Activated CD8-positive, alpha-beta T cell treated with anti-CD3 and anti-CD28 coated beads for 36 hours (primary cell): ENCODE measurements at regions of chr13 and their contacts with region 1.

Region 1: DNA sequence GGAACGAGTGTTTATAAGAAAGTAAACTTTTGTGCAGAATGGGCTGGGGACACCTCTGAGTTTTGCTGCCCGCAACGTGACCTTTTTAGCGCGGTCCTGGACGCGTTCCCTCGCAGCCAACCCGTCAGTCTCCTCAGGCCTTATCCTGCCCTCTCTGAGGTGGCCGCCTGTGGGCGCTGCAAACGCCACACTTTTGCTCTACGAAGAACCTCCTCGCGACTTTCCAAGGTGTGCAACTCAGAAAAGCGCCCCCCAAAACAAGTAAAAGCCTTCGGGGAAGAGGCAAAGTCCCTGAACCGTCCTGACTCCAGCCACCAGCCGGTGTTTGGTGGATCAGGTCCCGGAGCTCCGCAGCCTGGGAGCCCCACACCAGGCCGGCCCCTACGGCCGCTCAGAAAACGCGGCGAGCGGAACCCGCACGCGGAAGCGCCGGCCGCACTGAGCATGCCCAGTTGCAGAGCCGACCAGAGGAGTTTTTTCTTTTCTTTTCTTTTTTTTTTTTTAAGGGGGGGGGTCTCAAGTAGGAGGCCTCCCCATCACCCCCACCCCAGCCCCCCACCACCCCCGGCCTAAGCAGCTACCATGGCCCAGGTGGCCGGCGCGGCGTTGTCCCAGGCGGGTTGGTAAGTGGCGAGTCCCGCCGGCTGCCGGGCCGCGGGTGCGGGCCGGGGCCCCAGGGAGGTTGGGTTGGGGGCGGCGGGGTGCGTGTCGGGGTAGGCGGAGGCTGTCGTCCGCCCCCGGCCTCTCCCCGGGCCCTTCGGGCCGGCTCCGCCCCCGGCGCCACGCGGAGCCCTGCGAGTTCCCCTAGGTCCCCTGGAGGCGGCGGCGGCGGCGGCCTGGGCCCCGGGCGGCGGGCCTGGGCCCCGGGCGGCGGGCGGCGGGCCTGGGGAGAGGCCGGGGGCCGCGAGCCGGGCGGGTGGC is at the start of gene TDRD3:
- DNase-seq: peak; percentile 91
- ATAC-seq: peak; percentile 78
- H3K4me3 Mint-ChIP-seq: peak within 1 kb of the TSS; percentile 96
- H3K27ac Mint-ChIP-seq: peak within 1 kb of the TSS; percentile 99
- H3K4me1 Mint-ChIP-seq: peaks cover 36% of the 10 kb centered on the region
- H3K27me3 Mint-ChIP-seq: no peaks in the 10 kb centered on the region
- CTCF ChIP-seq: peak; percentile 62
- total RNA-seq, gene TDRD3: 17.1 to 19.0 TPM

Region 2: DNA sequence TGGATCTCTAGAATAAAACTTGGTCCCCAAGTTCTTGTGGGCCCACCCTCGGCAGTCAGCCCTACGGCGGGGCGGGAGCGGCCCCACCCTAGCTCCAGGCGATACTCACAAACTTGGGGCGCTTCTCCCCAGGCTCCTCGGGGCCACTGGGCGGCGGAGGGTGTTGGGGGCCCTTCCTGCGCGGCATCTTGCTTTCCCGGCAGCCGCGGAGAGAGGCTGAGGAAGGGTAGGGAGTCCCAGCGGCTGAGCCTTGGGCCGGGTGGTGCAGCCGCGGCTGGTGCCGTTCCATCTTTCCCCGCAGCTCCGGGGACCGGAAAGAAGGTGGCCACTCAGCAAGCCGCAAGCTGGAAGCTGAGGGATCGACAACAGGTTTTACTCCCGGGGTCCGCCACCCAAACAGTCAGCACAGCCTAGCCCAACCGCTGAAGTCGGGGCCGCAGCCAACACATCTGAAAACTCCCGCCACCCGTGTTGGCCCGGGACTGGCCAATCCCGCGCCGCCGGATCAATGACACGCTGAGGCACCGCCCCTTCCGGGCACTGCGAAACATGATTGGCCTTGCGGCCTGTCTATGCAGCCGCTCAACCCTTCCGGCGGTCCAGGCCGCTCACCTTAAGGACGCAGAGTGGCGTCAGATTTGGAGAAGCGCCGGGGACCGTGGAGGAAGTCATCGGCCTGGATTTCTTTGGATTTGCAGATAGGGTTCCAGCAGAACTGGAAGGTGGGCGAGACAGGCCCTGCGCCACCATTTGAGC is 233.4 kb before region 1 on chr13 and contains the start of gene DIAPH3:
- CTCF ChIA-PET with region 1: no interaction called
- POLR2A ChIA-PET with region 1: interaction called, 7 read pairs
- intact Hi-C with region 1: loop called (anchors 2 kb)
- DNase-seq: peak; percentile 97
- ATAC-seq: peak; percentile 99
- H3K4me3 Mint-ChIP-seq: peak within 1 kb of the TSS; percentile 94
- H3K27ac Mint-ChIP-seq: peak within 1 kb of the TSS; percentile 97
- H3K4me1 Mint-ChIP-seq: peaks cover 33% of the 10 kb centered on the region
- H3K27me3 Mint-ChIP-seq: peaks cover 2% of the 10 kb centered on the region
- CTCF ChIP-seq: no peak
- total RNA-seq, gene DIAPH3: 23.0 to 25.4 TPM

Region 3: DNA sequence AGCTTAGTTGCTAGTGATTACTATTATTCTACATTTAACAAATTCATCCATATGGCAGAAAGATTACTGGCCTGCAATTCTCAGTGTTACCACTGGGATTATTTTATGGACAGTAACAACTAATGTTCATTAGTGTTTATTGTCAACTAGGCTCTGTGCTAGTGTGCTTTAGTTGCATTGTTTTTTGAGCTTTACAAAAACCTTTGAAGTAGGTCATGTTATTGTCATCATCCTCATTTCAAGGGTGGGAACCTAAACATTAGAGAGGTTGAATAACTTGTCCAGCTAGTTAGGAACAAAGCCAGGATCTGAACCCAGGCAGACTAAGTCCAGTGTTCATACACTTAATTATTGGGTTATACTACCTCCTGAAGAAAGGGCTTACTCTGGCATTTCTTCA is 27.8 kb before region 1 on chr13:
- CTCF ChIA-PET with region 1: interaction called, 11 read pairs
- POLR2A ChIA-PET with region 1: no interaction called
- intact Hi-C with region 1: no loop called
- DNase-seq: no peak
- ATAC-seq: no peak
- H3K4me3 Mint-ChIP-seq: no peak overlapping the region
- H3K27ac Mint-ChIP-seq: no peak overlapping the region
- H3K4me1 Mint-ChIP-seq: peaks cover 2% of the 10 kb centered on the region
- H3K27me3 Mint-ChIP-seq: no peaks in the 10 kb centered on the region
- CTCF ChIP-seq: peak; percentile 25

Region 4: DNA sequence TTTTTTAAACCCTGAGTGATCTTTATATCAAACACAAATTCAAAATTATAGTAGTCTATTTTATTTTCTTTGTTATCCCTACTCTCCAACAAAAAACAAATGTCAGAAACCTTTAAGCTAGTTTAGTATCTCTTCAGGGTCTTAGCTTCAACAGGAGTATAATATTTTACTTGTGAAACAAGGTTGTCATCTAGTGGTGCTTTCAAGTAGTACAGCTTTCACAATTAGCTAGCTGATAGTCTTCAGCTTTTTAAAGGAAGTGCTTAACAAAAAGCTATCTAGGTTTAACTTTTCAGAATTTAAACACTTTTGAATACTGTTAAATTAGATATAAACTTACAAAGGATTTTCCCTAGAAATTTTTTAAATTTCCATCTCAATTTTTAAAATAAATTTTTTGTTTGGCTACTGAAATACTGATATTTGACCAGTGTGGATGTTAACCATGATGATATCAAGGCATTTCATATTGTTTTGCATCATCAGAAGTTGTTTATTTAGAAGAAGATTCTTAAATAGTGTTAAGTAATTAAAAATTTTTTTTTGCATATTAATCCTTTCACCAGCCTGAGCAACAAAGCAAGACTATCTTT is 34.2 kb after region 1 on chr13:
- CTCF ChIA-PET with region 1: interaction called, 15 read pairs
- POLR2A ChIA-PET with region 1: interaction called, 5 read pairs
- intact Hi-C with region 1: loop called (anchors 5 kb)
- DNase-seq: no peak
- ATAC-seq: peak; percentile 88
- H3K4me3 Mint-ChIP-seq: no peak overlapping the region
- H3K27ac Mint-ChIP-seq: no peak overlapping the region
- H3K4me1 Mint-ChIP-seq: peaks cover 22% of the 10 kb centered on the region
- H3K27me3 Mint-ChIP-seq: no peaks in the 10 kb centered on the region
- CTCF ChIP-seq: peak; percentile 88

Region 5: DNA sequence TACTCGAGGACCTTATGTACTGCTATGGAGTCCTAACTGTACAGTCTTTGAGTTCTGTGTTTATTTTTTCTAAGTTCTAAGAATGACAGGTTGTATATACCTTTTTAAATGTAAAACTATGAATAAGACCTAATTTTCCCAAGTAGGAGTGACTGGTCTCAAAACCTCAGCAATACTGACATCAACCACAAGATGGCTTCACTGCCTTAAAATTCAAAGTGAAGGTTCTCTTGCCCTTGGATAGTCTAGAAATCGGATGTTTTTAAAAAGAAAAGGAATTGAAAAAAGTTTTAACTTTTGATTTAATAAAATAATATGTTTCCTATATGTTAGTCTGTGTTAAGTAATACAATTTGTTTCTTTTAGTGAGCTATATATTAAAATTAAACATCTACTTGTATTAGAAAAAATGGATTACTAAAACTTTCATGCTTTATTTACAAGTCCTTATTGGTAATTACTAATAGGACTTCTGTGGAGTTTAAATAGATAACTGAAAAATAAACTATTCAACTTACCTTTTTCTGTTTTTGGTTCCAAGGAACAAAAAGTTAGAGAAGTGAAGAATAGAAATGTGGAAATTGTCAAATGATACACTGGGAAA is 52.0 kb after region 1 on chr13:
- CTCF ChIA-PET with region 1: no interaction called
- POLR2A ChIA-PET with region 1: no interaction called
- intact Hi-C with region 1: no loop called
- DNase-seq: peak; percentile 12
- ATAC-seq: peak; percentile 58
- H3K4me3 Mint-ChIP-seq: no peak overlapping the region
- H3K27ac Mint-ChIP-seq: no peak overlapping the region
- H3K4me1 Mint-ChIP-seq: no peaks in the 10 kb centered on the region
- H3K27me3 Mint-ChIP-seq: no peaks in the 10 kb centered on the region
- CTCF ChIP-seq: peak; percentile 71